ENCODE measurements at regions of chr3 and their contacts with region 1.

Region 1: DNA sequence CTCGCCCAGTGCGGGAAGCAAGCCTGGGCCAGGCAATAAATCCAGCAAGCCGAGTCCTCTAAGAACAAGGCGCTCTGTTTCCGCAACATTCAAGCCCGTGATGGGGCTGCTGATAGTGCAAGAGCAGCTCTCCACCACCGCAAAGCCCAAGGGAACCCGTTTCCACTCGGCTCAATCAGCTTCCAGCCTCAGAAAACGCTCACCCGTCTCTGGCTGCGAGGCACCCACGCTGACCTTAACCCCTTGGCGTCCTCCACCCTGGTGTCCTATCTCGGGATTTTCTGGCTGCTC is 17.8 kb downstream of the SPATA12 start:
- DNase-seq: peak; percentile 88
- H3K4me3 ChIP-seq: peak overlapping the region; percentile 65 to 99 (median 88)
- H3K27ac ChIP-seq: peak overlapping the region; percentile 74 to 93 (median 83)
- H3K4me1 ChIP-seq: peaks cover 0 to 23% (median 14%) of the 10 kb centered on the region in 4 donors
- H3K27me3 ChIP-seq: no peaks in the 10 kb centered on the region
- CTCF ChIP-seq: no peak
- EP300 ChIP-seq: no peak
- POLR2A ChIP-seq: no peak

Region 2: GRCh38 chr3:56610669-56611335 is 467.5 kb before region 1 on chr3:
- intact Hi-C with region 1: no loop called
- DNase-seq: no peak
- H3K4me3 ChIP-seq: no peak overlapping the region
- H3K27ac ChIP-seq: no peak overlapping the region
- H3K4me1 ChIP-seq: peaks cover 0 to 7% (median 2%) of the 10 kb centered on the region in 4 donors
- H3K27me3 ChIP-seq: no peaks in the 10 kb centered on the region
- CTCF ChIP-seq: no peak
- EP300 ChIP-seq: no peak
- POLR2A ChIP-seq: no peak

Region 3: GRCh38 chr3:56682462-56683121 is 395.7 kb before region 1 on chr3:
- intact Hi-C with region 1: loop called (anchors 5 kb)
- DNase-seq: peak; percentile 88
- H3K4me3 ChIP-seq: peak overlapping the region; percentile 45 to 93 (median 88)
- H3K27ac ChIP-seq: peak overlapping the region; percentile 96 to 100 (median 100)
- H3K4me1 ChIP-seq: peaks cover 0 to 27% (median 18%) of the 10 kb centered on the region in 4 donors
- H3K27me3 ChIP-seq: no peaks in the 10 kb centered on the region
- CTCF ChIP-seq: no peak
- EP300 ChIP-seq: no peak
- POLR2A ChIP-seq: peak; percentile 6 to 64

Region 4: DNA sequence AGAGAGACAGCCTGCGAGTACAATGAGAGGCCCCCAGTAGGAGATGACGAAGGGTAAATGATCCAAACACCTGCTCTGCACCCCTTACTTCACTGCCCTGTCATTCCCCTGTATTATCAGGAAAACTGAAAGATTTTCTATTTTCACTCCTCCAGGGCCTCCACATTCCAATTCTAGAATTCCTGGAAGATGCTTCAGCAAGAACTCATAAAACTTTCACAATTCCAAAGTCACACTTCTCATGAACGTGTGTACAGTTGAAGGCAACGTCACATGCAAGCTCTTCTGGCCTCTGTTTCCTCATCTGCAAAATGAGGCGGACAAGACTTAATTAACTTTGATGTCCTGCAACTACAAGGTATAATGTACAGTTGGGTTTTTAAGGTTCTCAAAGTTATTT is 80.6 kb before region 1 on chr3:
- intact Hi-C with region 1: loop called (anchors 2 kb)
- DNase-seq: no peak
- H3K4me3 ChIP-seq: no peak overlapping the region
- H3K27ac ChIP-seq: peak overlapping the region; percentile 53 to 78 (median 72)
- H3K4me1 ChIP-seq: peaks cover 0 to 45% (median 29%) of the 10 kb centered on the region in 4 donors
- H3K27me3 ChIP-seq: no peaks in the 10 kb centered on the region
- CTCF ChIP-seq: no peak
- EP300 ChIP-seq: no peak
- POLR2A ChIP-seq: no peak

Region 5: DNA sequence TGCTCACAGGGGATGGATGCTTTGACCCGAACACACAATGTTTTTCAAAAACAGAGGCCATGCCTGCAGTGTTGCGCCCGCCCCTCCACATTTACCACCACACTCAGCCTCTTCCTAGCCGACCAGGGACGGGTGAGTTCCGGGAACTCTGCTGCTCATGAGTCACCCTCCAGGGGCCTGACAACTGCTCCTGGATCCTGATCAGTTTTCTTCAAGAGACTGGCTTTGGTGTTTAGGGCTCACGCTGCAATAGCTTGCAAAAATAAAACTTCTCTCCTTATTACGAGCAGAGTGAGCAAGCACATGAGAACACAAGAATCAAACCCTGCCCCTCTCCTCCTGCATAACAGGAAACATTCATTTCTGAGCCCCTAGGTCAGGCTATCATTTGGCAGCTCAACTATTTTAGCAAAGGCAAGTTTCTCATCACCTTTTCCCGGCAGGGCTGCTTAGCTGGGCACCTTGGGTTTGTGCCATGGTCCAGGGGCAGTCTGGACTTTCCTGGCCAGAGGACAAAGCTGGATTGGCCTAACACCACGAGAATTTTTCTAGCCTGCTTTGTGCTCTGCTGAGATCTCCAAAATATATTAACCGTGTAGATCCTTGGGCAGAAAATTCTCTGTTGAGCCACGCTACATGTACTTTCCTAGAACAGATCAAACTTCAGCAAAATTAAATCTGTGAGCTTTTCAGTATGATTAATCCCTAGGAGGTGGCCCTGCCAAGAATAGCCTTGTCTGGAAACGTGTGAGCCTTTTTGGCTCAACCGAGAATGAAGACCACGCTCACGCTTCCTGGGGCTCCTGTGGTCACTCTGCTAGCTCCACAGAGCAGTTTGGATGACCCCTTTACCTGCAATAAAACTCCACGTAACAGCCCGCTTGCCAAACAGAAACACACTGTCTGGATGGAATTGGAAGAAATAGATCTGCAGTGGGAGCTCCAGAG is 70.5 kb before region 1 on chr3:
- intact Hi-C with region 1: loop called (anchors 2 kb)
- DNase-seq: peak; percentile 93
- H3K4me3 ChIP-seq: peak overlapping the region in 2 of 4 donors; percentile 18 to 23
- H3K27ac ChIP-seq: peak overlapping the region; percentile 79 to 92 (median 88)
- H3K4me1 ChIP-seq: peaks cover 0 to 89% (median 80%) of the 10 kb centered on the region in 4 donors
- H3K27me3 ChIP-seq: no peaks in the 10 kb centered on the region
- CTCF ChIP-seq: no peak
- EP300 ChIP-seq: peak in 1 of 4 donors; percentile 59
- POLR2A ChIP-seq: no peak

Measured in sigmoid colon (tissue), 7 donors.